ENCODE measurements at regions of chr4 and their contacts with region 1.

Region 1: GRCh38 chr4:107548211-107548905 is 171.7 kb downstream of the PAPSS1 start:
- DNase-seq: no peak
- ATAC-seq: no peak
- H3K4me3 ChIP-seq: no peak overlapping the region
- H3K27ac ChIP-seq: no peak overlapping the region
- H3K4me1 ChIP-seq: no peaks in the 10 kb centered on the region
- H3K27me3 ChIP-seq: no peaks in the 10 kb centered on the region
- CTCF ChIP-seq: no peak
- POLR2A ChIP-seq: no peak

Region 2: GRCh38 chr4:107500551-107500950 is 47.8 kb before region 1 on chr4:
- in situ Hi-C with region 1: no loop called
- intact Hi-C with region 1: loop called (anchors 2 kb)
- DNase-seq: no peak
- ATAC-seq: no peak
- H3K4me3 ChIP-seq: no peak overlapping the region
- H3K27ac ChIP-seq: no peak overlapping the region
- H3K4me1 ChIP-seq: no peaks in the 10 kb centered on the region
- H3K27me3 ChIP-seq: no peaks in the 10 kb centered on the region
- CTCF ChIP-seq: no peak
- POLR2A ChIP-seq: no peak

Region 3: GRCh38 chr4:107606700-107607099 is 58.3 kb after region 1 on chr4:
- in situ Hi-C with region 1: no loop called
- intact Hi-C with region 1: no loop called
- DNase-seq: no peak
- ATAC-seq: no peak
- H3K4me3 ChIP-seq: no peak overlapping the region
- H3K27ac ChIP-seq: no peak overlapping the region
- H3K4me1 ChIP-seq: no peaks in the 10 kb centered on the region
- H3K27me3 ChIP-seq: no peaks in the 10 kb centered on the region
- CTCF ChIP-seq: no peak
- POLR2A ChIP-seq: no peak

Measured in gastrocnemius medialis (tissue), 4 donors.